ENCODE measurements at regions of chr7 and their contacts with region 1.

Region 1: DNA sequence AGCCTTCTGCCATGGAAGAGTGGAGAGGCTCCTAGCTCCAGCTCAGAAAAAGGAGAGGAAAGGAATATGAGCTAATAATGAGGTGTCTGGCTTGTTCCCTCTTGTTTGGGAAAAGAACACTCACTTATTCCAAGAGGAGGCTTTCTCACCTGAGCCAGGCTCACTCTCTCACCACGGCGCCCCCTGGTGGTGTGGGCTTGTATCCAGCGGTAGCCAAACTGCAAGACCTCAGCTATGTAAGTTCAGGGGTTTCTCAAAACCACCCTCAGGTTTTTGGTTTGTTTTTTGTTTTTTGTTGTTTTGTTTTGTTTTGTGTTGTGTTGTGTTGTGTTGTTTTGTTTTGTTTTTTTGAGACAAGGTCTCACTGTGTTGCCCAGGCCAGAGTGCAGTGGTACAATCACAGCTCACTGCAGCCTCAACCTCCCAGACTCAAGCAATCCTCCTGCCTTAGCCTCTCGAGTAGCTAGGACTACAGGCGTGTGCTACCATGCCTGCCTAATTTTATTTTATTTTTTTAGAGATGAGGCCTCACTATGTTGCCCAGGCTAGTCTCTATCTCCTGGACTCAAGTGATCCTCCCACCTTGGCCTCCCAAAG is 124.0 kb downstream of the TMEM130 start:
- DNase-seq: no peak
- H3K4me3 ChIP-seq: no peak overlapping the region
- H3K27ac ChIP-seq: no peak overlapping the region
- H3K27me3 ChIP-seq: no peaks in the 10 kb centered on the region
- CTCF ChIP-seq: peak; percentile 69

Region 2: GRCh38 chr7:98598846-98599615 is 146.8 kb before region 1 on chr7:
- CTCF ChIA-PET with region 1: no interaction called
- POLR2A ChIA-PET with region 1: no interaction called
- DNase-seq: no peak
- H3K4me3 ChIP-seq: no peak overlapping the region
- H3K27ac ChIP-seq: no peak overlapping the region
- H3K27me3 ChIP-seq: no peaks in the 10 kb centered on the region
- CTCF ChIP-seq: no peak

Region 3: DNA sequence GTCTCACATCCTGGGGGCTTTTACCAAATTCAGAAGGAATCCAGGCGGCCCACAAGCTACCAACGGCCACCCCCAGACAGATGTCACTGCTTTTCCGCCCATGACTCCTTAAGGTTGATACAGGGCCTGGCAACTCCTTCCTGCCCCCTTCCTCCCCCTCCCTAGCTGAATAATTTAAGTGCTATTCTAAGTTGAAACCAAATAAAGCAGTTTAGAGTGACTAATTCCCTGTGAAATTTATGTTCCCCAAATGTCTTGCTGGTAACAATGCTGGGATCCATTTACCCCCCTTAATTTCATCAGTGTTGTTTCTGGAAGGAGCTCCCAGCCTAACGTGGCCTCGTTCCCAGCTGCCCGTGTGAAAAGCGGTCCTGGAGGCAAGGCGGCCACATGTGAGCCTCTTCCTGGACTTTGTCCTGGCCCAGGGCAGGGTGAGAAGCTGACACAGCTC is 14.4 kb after region 1 on chr7:
- CTCF ChIA-PET with region 1: no interaction called
- POLR2A ChIA-PET with region 1: no interaction called
- DNase-seq: no peak
- H3K4me3 ChIP-seq: no peak overlapping the region
- H3K27ac ChIP-seq: no peak overlapping the region
- H3K27me3 ChIP-seq: no peaks in the 10 kb centered on the region
- CTCF ChIP-seq: no peak

Region 4: DNA sequence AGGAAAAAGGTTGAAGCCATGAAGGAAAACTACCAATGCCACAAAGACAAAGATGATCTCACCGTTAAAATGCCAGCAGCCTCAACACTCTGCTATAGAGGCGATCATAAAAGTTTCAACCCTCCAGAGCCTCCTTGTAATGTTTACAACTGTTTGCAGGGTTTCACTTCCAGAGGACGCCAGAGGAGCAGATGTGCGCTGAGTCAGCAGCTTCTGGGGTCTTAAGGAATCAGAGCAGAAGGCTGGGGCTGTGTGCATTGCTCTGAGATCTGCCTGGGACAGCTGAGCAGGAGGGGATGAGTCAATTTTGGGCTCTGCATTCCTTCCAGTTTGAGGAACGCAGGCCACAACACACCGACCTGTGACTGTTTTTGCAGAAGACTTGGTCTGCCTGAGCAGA is 25.7 kb after region 1 on chr7:
- CTCF ChIA-PET with region 1: interaction called, 17 read pairs
- POLR2A ChIA-PET with region 1: no interaction called
- DNase-seq: peak; percentile 65
- H3K4me3 ChIP-seq: peak overlapping the region; percentile 13; the same call in 1 of the 2 replicates
- H3K27ac ChIP-seq: peak overlapping the region; percentile 22
- H3K27me3 ChIP-seq: no peaks in the 10 kb centered on the region
- CTCF ChIP-seq: no peak